ENCODE measurements at regions of chr13 and their contacts with region 1.

Region 1: DNA sequence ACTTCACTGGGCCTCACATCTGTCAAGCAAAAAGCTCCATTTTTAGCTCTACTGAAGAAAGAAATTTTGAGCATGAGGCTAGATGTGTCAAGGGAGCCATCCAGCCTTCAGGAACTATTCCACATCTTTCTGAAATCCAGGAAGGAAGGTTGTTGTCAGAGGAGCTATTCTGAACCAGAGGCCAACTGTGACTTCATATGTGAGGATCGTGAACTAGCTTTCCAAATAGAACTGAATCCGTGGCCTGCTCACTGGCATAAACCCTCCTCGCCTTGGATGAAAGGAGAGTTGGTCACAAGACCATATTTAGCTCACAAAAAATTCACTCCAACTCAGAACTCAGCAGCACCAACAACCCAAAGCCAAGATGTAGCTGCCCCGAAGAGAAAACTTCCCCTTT is 195.8 kb downstream of the FOXO1 start:
- DNase-seq: no peak

Region 2: DNA sequence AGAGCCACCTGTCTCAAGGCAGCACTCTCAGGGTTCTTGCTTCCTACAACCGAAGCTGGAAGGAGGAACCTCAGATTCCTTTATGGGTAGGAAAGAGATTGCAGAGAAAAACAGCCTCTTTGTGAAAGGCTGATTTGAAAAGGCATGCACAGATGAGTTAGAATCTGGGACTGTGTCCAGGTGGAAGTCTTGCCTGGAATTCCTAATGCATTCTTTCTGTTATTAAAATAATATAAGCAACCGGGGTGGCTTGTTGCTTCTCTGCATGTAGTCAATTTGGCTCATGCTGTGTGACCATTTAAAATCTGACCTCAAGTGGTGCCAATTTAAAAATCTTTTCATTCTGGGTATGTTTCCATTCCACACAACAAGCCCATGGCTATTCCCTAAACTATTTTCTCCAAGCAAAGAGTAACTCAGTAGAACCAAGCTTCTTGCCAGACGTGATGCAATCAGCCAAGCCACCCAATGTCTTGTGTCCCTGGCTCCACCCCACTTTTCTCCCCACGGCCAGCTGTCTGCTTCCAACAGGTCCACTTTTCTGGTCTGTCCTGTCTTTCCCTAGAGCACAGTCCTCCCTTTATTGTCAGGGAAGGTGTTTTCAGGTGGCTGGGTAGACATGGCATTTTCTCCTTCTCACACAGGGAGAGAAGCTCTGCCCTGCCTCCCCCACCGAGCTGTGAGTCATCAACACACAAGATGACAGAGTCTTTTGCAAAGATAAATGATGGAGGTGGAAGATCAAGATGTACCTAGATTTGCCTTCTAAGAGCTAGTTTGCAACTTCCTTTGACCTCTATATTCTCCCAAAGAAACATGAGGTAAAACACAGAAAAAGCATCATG is 198.5 kb before region 1 on chr13:
- intact Hi-C with region 1: loop called (anchors 5 kb)
- DNase-seq: no peak

Measured in cardiac septum (tissue), 1 donor.